Sigmoid colon (tissue), 7 donors: ENCODE measurements at regions of chr13 and their contacts with region 1.

Region 1: DNA sequence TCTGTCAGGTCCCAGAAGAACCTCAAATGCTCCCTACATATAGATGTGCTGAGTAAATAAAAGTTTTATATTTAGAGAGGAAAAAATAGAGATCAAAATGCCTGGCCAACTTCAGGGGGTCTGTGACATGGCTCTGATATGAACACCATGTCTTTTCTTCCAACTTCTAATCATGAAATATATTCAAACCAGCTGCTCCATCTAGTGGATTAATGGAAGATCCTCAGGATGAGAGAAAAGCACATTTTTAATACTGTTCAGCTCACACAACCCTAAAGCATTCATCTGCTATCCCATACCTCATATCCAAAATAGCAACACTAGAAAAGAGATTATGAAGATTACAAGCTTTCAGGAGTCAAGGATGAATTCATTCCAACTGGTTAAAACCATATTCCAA is 56.0 kb upstream of the DOCK9 start:
- DNase-seq: no peak
- H3K4me3 ChIP-seq: no peak overlapping the region
- H3K27ac ChIP-seq: no peak overlapping the region
- H3K4me1 ChIP-seq: peaks cover 0 to 25% (median 4%) of the 10 kb centered on the region in 4 donors
- H3K27me3 ChIP-seq: no peaks in the 10 kb centered on the region
- CTCF ChIP-seq: peak in 3 of 4 experiments; percentile 37 to 59 (median 44)
- EP300 ChIP-seq: no peak
- POLR2A ChIP-seq: no peak

Region 2: DNA sequence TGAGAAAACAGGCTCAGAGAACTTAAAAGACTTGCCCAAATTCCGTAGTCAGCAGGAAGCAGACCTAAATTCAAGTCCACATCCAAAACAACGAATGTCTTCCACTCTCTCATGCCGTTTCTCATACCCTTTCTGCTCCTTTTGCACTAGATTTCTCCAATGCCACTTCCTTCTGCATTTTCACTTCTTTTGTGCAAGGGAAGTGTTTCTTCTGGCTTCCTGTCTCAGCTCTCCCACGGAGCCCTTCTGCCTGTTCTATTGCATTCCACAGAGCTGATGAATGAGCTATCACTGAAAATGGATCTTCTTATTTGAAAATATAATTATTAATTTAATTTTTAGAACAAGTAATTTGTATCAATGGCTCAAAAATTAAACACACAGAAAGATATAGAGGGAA is 400.9 kb before region 1 on chr13:
- intact Hi-C with region 1: no loop called
- DNase-seq: no peak
- H3K4me3 ChIP-seq: no peak overlapping the region
- H3K27ac ChIP-seq: no peak overlapping the region
- H3K4me1 ChIP-seq: no peaks in the 10 kb centered on the region
- H3K27me3 ChIP-seq: no peaks in the 10 kb centered on the region
- CTCF ChIP-seq: no peak
- EP300 ChIP-seq: no peak
- POLR2A ChIP-seq: no peak

Region 3: GRCh38 chr13:98653463-98653985 is 380.3 kb before region 1 on chr13:
- intact Hi-C with region 1: no loop called
- DNase-seq: peak; percentile 90
- H3K4me3 ChIP-seq: no peak overlapping the region
- H3K27ac ChIP-seq: no peak overlapping the region
- H3K4me1 ChIP-seq: no peaks in the 10 kb centered on the region
- H3K27me3 ChIP-seq: no peaks in the 10 kb centered on the region
- CTCF ChIP-seq: peak; percentile 85 to 94 (median 90)
- EP300 ChIP-seq: no peak
- POLR2A ChIP-seq: no peak

Region 4: GRCh38 chr13:98842864-98843481 is 190.8 kb before region 1 on chr13:
- intact Hi-C with region 1: loop called (anchors 5 kb)
- DNase-seq: peak; percentile 81
- H3K4me3 ChIP-seq: no peak overlapping the region
- H3K27ac ChIP-seq: no peak overlapping the region
- H3K4me1 ChIP-seq: no peaks in the 10 kb centered on the region
- H3K27me3 ChIP-seq: no peaks in the 10 kb centered on the region
- CTCF ChIP-seq: peak; percentile 19 to 77 (median 59)
- EP300 ChIP-seq: no peak
- POLR2A ChIP-seq: no peak

Region 5: GRCh38 chr13:98909016-98909415 is 124.8 kb before region 1 on chr13:
- intact Hi-C with region 1: loop called (anchors 10 kb)
- DNase-seq: no peak
- H3K4me3 ChIP-seq: no peak overlapping the region
- H3K27ac ChIP-seq: peak overlapping the region in 1 of 4 donors; percentile 52
- H3K4me1 ChIP-seq: peaks cover 0 to 18% (median 6%) of the 10 kb centered on the region in 4 donors
- H3K27me3 ChIP-seq: no peaks in the 10 kb centered on the region
- CTCF ChIP-seq: no peak
- EP300 ChIP-seq: no peak
- POLR2A ChIP-seq: no peak

Region 6: DNA sequence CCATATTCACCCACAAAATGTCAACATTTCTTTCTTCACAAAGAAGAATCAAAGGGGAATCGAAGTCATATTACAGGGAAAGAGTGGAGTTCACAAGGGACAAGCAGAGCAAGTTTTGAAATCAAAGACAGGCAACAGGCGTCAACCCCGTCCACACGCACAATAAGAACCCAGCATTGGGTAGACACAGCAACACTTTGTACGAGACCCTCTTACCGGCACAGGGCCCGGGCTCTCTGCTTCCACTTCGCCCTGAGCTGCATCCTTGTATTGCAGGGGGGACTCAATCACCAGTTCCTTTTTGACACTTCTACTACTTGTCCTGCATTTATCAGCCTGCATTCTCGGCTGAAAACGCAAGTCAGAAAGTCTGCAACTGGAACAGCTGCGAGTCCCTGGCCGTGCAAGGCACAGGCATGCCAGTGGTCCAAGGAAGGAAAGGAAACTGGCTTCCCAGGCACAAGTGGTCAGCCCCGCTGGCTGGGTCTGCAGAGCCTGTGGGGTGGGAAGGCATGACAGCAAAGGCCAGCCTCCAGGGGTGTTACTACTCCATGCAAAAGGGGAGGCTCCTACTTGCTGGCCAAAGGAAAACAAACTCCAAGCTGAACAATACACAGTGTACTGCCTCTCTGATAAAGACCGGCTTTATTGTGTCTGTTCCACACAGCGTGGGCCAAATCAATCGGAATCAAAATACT is 56.1 kb before region 1 on chr13 and contains the start of gene DOCK9:
- intact Hi-C with region 1: loop called (anchors 5 kb)
- DNase-seq: peak; percentile 76
- H3K4me3 ChIP-seq: peak within 1 kb of the TSS; percentile 18 to 43 (median 40)
- H3K27ac ChIP-seq: peak within 1 kb of the TSS; percentile 55 to 71 (median 63)
- H3K4me1 ChIP-seq: peaks cover 0 to 53% (median 43%) of the 10 kb centered on the region in 4 donors
- H3K27me3 ChIP-seq: no peaks in the 10 kb centered on the region
- CTCF ChIP-seq: no peak
- EP300 ChIP-seq: no peak
- POLR2A ChIP-seq: no peak
- total RNA-seq, gene DOCK9: 60.4 to 126 (median 83.6) TPM

Region 7: GRCh38 chr13:99150575-99151370 is 117.0 kb after region 1 on chr13:
- intact Hi-C with region 1: no loop called
- DNase-seq: no peak
- H3K4me3 ChIP-seq: no peak overlapping the region
- H3K27ac ChIP-seq: no peak overlapping the region
- H3K4me1 ChIP-seq: no peaks in the 10 kb centered on the region
- H3K27me3 ChIP-seq: no peaks in the 10 kb centered on the region
- CTCF ChIP-seq: no peak
- EP300 ChIP-seq: no peak
- POLR2A ChIP-seq: no peak